WTC11 (cell line): ENCODE measurements at regions of chr19 and their contacts with region 1.

Region 1: DNA sequence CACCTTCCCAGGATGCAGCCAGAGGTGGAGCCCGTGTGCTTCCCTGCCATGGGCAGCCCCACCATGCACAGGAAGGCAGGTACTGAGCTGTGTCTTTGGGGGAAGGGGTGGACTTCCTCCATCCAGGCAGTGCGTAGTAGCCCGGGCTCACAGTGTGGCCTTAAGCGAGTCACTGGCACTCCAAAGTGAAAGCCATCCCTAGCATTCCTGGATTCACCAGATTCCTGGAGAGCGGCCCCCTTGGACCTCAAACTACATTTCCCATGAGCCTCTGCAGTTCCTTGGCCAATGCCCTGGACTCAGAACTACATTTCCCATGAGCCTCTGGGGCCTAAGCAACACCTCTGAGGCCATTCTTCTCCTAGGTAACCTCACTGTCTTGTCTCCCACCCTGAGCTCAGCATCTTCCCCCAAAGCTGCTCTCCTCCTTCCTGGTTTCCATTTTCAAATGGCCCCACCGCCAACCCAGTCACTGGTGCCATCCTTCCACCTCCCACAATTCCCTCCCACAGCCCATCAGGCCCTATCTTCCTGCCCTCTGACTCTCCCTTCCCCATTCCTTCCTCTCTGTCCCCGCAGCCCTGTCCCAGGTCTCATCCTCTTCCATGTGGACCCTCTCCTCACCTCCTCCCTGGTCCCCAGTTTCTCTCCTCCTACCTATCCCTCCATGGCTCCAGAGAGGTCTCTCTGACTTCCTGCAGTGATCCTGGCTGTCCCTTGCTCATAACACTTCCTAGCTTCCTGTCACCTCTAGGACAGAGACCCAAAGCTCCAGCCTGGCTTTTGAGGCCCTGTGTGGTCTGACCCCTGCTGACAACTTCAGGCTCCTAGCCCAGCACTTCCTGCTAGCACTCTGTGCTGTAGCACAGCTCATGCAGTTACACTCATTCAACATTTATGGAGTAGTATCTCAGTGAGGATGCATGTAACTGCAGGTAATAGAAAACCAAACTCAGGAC is at the start of gene C19orf81:
- DNase-seq: peak; percentile 79
- ATAC-seq: peak; percentile 89
- H3K4me3 Mint-ChIP-seq: peak within 1 kb of the TSS; percentile 44
- H3K27ac Mint-ChIP-seq: peak within 1 kb of the TSS; percentile 66; the same call in 1 of the 2 replicates
- H3K4me1 Mint-ChIP-seq: peaks cover 21% of the 10 kb centered on the region
- H3K27me3 Mint-ChIP-seq: peaks cover 35% of the 10 kb centered on the region
- CTCF ChIP-seq: no peak
- total RNA-seq, gene C19orf81: 22.4 to 24.5 TPM (median 22.9 TPM) in 3 replicates

Region 2: DNA sequence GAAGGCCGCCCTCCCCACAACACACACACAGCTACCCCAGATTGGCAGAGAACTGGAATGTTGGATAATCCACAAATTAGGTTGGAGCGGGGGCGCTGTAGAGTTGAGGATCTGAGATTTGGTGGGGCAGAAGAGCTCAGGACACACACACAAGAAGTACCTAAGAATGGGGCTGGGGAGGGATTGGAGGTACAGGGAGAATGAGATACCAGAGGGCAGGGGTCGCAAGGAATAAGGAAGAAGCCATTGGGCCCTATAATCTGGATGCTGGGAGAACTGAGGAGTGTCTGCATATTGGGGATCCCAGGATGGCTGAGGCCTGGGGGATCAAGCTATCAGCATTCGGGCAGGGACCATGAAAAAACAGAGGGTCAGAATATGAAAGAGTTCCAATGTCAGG is 21.6 kb before region 1 on chr19:
- CTCF ChIA-PET with region 1: interaction called, 10 read pairs
- POLR2A ChIA-PET with region 1: no interaction called
- DNase-seq: no peak
- ATAC-seq: no peak; the same call in 1 of the 2 replicates
- H3K4me3 Mint-ChIP-seq: no peak overlapping the region
- H3K27ac Mint-ChIP-seq: no peak overlapping the region
- H3K4me1 Mint-ChIP-seq: no peaks in the 10 kb centered on the region
- H3K27me3 Mint-ChIP-seq: peaks cover 4% of the 10 kb centered on the region
- CTCF ChIP-seq: no peak